ENCODE measurements at regions of chr18 and their contacts with region 1.

Region 1: GRCh38 chr18:14074187-14074586 is 58.0 kb downstream of the ZNF519 start:
- DNase-seq: peak in 1 of 2 experiments; percentile 7
- H3K4me3 ChIP-seq: no peak overlapping the region
- H3K27ac ChIP-seq: no peak overlapping the region
- H3K4me1 ChIP-seq: no peaks in the 10 kb centered on the region
- H3K27me3 ChIP-seq: no peaks in the 10 kb centered on the region
- CTCF ChIP-seq: peak; percentile 67 to 97 (median 72)
- EP300 ChIP-seq: no peak
- POLR2A ChIP-seq: no peak
- RAD21 ChIP-seq: peak; percentile 76

Region 2: DNA sequence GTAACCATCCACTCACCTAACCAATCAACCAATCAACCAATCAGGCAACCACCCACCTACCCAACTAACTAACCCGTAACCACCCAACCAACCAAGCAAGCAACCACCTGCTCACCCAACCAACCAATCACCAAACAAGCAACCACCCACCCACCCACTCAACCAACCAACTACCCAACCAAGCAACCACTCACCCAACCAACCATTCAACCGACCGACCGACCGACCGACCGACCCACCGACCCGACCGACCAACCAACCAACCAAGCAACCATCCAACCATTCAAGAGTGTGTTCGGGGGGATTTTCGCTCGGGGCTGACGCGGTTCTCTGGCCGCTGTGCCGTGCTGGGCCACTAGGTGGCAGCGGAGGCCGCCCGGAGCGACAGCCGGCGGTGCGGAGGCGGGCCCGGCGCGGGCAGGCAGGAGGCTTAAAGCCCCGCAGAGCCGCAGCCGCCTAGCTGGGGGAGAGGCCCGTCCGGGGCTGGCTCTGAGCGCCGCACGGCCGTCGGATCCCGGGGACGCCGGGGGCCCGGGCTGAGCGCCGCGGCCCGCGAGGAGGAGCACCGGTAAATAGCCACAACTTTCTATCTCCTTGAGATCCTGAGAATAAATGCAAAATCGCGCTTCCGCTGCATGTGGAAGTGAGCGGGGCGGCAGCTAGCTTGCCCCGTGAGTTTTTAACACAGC is 250.3 kb before region 1 on chr18 and contains the start of gene MC5R:
- CTCF ChIA-PET with region 1: interaction called, 10 read pairs
- POLR2A ChIA-PET with region 1: no interaction called
- DNase-seq: peak in 1 of 2 experiments; percentile 95
- H3K4me3 ChIP-seq: peak within 1 kb of the TSS in 3 of 4 experiments; percentile 27 to 55 (median 48); a peak in 5 of 8 replicates
- H3K27ac ChIP-seq: no peak within 1 kb of the TSS
- H3K4me1 ChIP-seq: peaks cover 0 to 2% (median 0%) of the 10 kb centered on the region in 4 experiments; a peak in 1 of 7 replicates
- H3K27me3 ChIP-seq: no peaks in the 10 kb centered on the region
- CTCF ChIP-seq: peak; percentile 82 to 93 (median 90)
- EP300 ChIP-seq: no peak
- POLR2A ChIP-seq: no peak
- RAD21 ChIP-seq: peak; percentile 90 to 95
- total RNA-seq, gene MC5R: 0.31 and 0.37 TPM in 2 replicates

Measured in H1 (cell line).